CD14-positive monocyte (primary cell): ENCODE measurements at regions of chr2 and their contacts with region 1.

Region 1: GRCh38 chr2:233061591-233062450 is 1.7 kb downstream of the INPP5D start:
- DNase-seq: peak; percentile 45 to 76 (median 60)
- H3K4me3 ChIP-seq: peak overlapping the region; percentile 81 to 99 (median 87)
- H3K4me3 Mint-ChIP-seq: peak overlapping the region; percentile 97 to 98
- H3K27ac ChIP-seq: peak overlapping the region; percentile 80 to 99
- H3K27ac Mint-ChIP-seq: peak overlapping the region; percentile 92 to 97 (median 96)
- H3K4me1 ChIP-seq: peaks cover 53 to 66% of the 10 kb centered on the region in 2 donors
- H3K4me1 Mint-ChIP-seq: peaks cover 56% of the 10 kb centered on the region
- H3K27me3 ChIP-seq: no peaks in the 10 kb centered on the region
- H3K27me3 Mint-ChIP-seq: peaks cover 0 to 4% (median 0%) of the 10 kb centered on the region in 3 donors
- CTCF ChIP-seq: peak; percentile 44

Region 2: GRCh38 chr2:233089851-233090250 is 28.0 kb after region 1 on chr2:
- intact Hi-C with region 1: loop called (anchors 2 to 5 kb)
- DNase-seq: no peak
- H3K4me3 ChIP-seq: no peak overlapping the region
- H3K4me3 Mint-ChIP-seq: no peak overlapping the region
- H3K27ac ChIP-seq: peak overlapping the region in 1 of 2 donors; percentile 95
- H3K27ac Mint-ChIP-seq: peak overlapping the region in 3 of 7 donors; percentile 33 to 75 (median 54)
- H3K4me1 ChIP-seq: peaks cover 80 to 83% of the 10 kb centered on the region in 2 donors
- H3K4me1 Mint-ChIP-seq: peaks cover 86% of the 10 kb centered on the region
- H3K27me3 ChIP-seq: no peaks in the 10 kb centered on the region
- H3K27me3 Mint-ChIP-seq: peaks cover 0 to 1% (median 0%) of the 10 kb centered on the region in 3 donors
- CTCF ChIP-seq: no peak

Region 3: DNA sequence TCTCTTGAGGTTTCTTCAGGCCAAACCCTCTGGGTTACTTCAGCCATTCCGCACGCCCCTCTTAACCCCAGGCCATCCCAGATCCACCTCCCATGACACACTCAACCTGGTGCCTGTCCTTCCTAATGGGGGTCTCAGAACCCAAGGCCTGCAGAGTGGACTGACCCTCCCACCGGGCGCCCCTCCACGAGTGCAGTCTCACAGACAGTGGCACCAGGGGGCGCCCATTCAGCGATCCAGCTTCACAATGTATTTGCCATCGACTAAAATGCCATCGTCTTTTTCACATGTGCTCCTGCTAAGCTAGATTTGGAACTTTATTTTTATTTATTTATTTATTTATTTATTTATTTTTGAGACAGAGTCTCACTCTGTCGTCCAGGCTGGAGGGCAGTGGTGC is 36.8 kb after region 1 on chr2:
- intact Hi-C with region 1: loop called in 1 of 2 experiments (anchors 5 kb)
- DNase-seq: no peak
- H3K4me3 ChIP-seq: no peak overlapping the region
- H3K4me3 Mint-ChIP-seq: no peak overlapping the region
- H3K27ac ChIP-seq: peak overlapping the region in 1 of 2 donors; percentile 48
- H3K27ac Mint-ChIP-seq: peak overlapping the region in 5 of 7 donors; percentile 66 to 79 (median 69)
- H3K4me1 ChIP-seq: peaks cover 17 to 19% of the 10 kb centered on the region in 2 donors
- H3K4me1 Mint-ChIP-seq: peaks cover 49% of the 10 kb centered on the region
- H3K27me3 ChIP-seq: no peaks in the 10 kb centered on the region
- H3K27me3 Mint-ChIP-seq: no peaks in the 10 kb centered on the region
- CTCF ChIP-seq: peak; percentile 51

Region 4: GRCh38 chr2:233242231-233242927 is 180.6 kb after region 1 on chr2:
- intact Hi-C with region 1: loop called in 1 of 2 experiments (anchors 5 kb)
- DNase-seq: peak; percentile 85 to 94 (median 91)
- H3K4me3 ChIP-seq: peak overlapping the region in 1 of 3 experiments; percentile 61
- H3K4me3 Mint-ChIP-seq: peak overlapping the region; percentile 16 to 63
- H3K27ac ChIP-seq: peak overlapping the region; percentile 72 to 86
- H3K27ac Mint-ChIP-seq: peak overlapping the region; percentile 88 to 95 (median 94)
- H3K4me1 ChIP-seq: peaks cover 47 to 49% of the 10 kb centered on the region in 2 donors
- H3K4me1 Mint-ChIP-seq: peaks cover 50% of the 10 kb centered on the region
- H3K27me3 ChIP-seq: no peaks in the 10 kb centered on the region
- H3K27me3 Mint-ChIP-seq: peaks cover 0 to 5% (median 2%) of the 10 kb centered on the region in 3 donors
- CTCF ChIP-seq: no peak